ENCODE measurements at regions of chr9 and their contacts with region 1.

Region 1: GRCh38 chr9:94065535-94065961 is 18.7 kb upstream of the PTPDC1 start:
- DNase-seq: peak; percentile 56 to 72
- ATAC-seq: peak; percentile 84 to 91
- H3K4me3 ChIP-seq: no peak overlapping the region
- H3K27ac ChIP-seq: peak overlapping the region in 2 of 4 donors; percentile 1 to 18
- H3K4me1 ChIP-seq: no peaks in the 10 kb centered on the region
- H3K27me3 ChIP-seq: no peaks in the 10 kb centered on the region
- CTCF ChIP-seq: peak; percentile 72 to 91 (median 86)
- POLR2A ChIP-seq: no peak

Region 2: DNA sequence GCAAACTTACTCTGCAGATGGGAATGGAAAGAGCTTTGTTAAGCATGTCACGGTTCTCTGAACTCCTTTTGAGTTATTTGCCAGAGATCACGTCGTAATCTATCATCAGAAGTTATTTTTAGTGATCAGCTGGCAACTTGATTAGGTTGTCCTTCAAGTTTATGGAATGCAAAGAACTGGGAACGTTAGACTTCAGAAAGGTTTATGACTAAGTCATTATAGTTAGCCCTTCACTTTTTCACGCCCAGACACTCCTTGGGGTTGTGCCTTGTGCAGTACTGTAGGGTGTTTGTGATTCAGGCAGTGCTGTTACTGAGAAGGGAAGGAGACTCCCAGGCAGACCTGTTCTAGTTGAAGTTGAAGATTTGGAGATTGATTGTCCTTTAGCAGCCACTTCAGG is 515.9 kb before region 1 on chr9:
- in situ Hi-C with region 1: no loop called
- intact Hi-C with region 1: no loop called
- DNase-seq: no peak
- ATAC-seq: peak in 1 of 2 donors; percentile 50
- H3K4me3 ChIP-seq: no peak overlapping the region
- H3K27ac ChIP-seq: peak overlapping the region in 2 of 4 donors; percentile 24 to 40
- H3K4me1 ChIP-seq: peaks cover 0 to 10% of the 10 kb centered on the region in 2 donors
- H3K27me3 ChIP-seq: no peaks in the 10 kb centered on the region
- CTCF ChIP-seq: no peak
- POLR2A ChIP-seq: no peak

Region 3: DNA sequence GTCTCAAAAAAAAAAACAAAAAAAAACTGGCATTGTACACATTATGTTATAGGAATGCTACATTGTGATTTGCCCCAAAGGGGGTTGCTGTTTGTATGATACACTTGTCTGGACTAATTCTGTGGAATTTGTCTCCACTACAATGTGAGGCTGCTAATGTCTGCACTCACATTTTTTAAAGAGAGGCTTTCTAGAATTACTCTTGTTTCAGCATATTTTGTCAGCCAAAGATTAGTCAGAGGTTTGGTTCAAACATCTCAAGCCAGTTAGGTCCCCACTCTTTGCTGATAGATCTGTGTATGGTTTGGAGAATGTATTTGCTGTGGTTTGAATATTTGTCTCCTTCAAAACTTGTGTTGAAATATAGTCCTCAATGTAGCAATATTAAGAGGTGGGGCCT is 134.2 kb after region 1 on chr9:
- in situ Hi-C with region 1: loop called in 1 of 4 experiments (anchors 5 kb)
- intact Hi-C with region 1: no loop called
- DNase-seq: no peak
- ATAC-seq: no peak
- H3K4me3 ChIP-seq: no peak overlapping the region
- H3K27ac ChIP-seq: no peak overlapping the region
- H3K4me1 ChIP-seq: peaks cover 10 to 14% of the 10 kb centered on the region in 2 donors
- H3K27me3 ChIP-seq: no peaks in the 10 kb centered on the region
- CTCF ChIP-seq: no peak
- POLR2A ChIP-seq: no peak